Activated CD8-positive, alpha-beta T cell treated with anti-CD3 and anti-CD28 coated beads, Interleukin-2, amount 10 ng/mL, durations not matched to agents 7 days and 5 days (primary cell): ENCODE measurements at regions of chr11 and their contacts with region 1.

Region 1: DNA sequence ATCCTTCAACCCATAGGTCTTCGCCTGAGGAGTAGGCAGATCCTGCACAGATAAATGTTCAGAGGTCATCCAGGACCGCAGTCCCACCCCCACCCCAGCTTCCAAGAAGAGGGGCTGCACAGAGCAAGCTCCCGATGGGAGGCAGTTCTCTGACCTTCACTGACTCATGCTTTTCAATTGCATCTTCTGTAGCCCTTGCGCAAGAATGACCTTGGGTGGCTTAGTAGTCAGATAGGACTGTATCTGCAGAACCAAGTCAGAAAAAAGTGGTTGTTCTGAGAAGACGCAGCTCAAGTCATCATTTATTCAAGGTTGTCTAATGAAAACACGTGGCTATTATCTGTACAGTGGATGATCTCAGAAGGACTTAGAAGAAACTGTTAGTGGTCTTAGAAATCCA is 16.4 kb upstream of the GRAMD1B start:
- DNase-seq: no peak
- ATAC-seq: no peak
- H3K4me3 Mint-ChIP-seq: no peak overlapping the region
- H3K27ac Mint-ChIP-seq: no peak overlapping the region
- H3K4me1 Mint-ChIP-seq: peaks cover 6% of the 10 kb centered on the region
- H3K27me3 Mint-ChIP-seq: peaks cover 12% of the 10 kb centered on the region

Region 2: GRCh38 chr11:123351375-123351774 is 62.3 kb before region 1 on chr11:
- CTCF ChIA-PET with region 1: no interaction called
- POLR2A ChIA-PET with region 1: no interaction called
- DNase-seq: no peak
- ATAC-seq: no peak
- H3K4me3 Mint-ChIP-seq: no peak overlapping the region
- H3K27ac Mint-ChIP-seq: no peak overlapping the region
- H3K4me1 Mint-ChIP-seq: no peaks in the 10 kb centered on the region
- H3K27me3 Mint-ChIP-seq: peaks cover 13% of the 10 kb centered on the region

Region 3: DNA sequence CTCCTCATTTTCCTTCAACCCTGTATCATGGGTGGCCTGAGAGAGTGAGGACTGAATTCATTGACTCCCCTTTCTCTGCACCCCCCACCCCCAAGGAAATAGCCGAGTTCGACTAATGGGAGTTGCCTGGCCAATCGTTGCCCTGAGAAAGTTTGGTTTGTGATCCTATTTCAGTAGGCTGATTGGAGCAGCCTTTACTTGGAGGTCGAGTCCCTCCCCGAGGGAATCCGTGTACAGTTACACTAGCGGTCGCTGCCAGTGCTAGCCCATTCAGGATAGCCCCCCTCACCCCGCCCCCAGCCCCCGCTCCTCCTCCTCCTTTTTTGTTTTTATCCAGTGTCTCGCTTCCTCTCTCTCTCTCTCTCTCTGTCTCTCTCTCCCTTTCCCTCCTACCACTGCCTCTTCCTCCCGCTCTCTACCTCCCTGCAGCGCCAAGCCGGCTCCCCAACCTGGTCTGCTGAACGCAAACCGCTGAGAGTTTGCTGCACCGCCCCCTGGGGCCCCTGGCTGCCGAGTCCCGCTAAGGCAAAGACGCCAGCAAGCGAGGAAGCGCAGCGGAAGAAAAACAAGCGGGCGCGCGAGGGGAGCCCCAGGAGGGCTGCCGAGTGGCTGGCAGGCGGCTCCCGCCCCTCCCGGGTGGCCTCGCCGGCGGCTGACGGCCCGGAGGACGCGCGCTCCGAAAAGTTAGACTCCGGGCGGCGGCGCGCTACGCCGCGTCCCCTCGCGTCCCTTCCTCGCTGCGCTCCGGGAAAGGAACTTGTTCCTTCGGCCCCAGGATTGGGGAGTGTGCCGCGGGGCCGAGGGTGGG is 16.5 kb after region 1 on chr11 and contains the start of gene GRAMD1B:
- CTCF ChIA-PET with region 1: interaction called, 128 read pairs
- POLR2A ChIA-PET with region 1: interaction called, 3 read pairs
- DNase-seq: peak; percentile 90
- ATAC-seq: peak; percentile 85
- H3K4me3 Mint-ChIP-seq: peak within 1 kb of the TSS; percentile 88
- H3K27ac Mint-ChIP-seq: peak within 1 kb of the TSS; percentile 96
- H3K4me1 Mint-ChIP-seq: peaks cover 47% of the 10 kb centered on the region
- H3K27me3 Mint-ChIP-seq: peaks cover 3% of the 10 kb centered on the region
- total RNA-seq, gene GRAMD1B: 22.8 to 26.0 TPM